ACHN (cell line): ENCODE measurements at regions of chr7 and their contacts with region 1.

Region 1: DNA sequence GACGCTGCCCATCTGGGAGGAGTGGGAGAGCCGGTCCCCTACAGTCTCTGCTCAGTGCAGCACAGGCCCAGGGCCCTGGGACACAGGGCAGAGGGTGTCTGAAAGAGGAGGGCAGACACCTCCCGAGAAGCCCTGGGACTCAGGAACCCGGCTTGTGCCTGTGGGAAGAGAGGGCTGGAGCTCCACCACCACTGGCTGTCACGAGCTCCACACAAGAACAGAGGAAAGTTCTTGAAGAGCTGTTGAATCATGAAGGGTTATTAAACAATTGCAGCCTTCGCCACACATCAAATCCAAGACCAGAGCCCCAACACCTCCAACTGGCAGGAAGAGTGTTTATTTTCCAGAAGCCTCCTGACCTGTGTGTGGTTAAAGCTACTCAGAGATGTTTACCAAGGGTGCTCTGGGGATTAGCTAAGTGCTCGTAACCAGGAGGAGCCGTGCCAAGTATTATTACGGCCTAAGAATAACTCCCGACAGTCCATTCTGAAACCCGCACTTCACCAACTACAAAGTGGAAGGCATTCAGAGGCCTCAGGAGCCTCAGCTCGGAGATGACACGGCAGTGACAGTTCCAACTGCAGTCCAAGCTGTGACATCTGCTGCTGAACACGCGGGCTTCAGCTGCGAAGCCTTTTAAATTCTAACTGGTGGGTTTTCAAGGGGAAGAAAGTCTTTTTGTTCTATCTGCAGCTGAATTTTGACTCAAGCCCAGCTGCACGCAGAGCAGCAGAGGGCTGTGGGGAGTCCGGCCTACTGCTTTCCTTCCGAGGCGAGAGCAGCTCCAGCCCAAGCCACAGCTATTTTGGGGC is 75.1 kb downstream of the MAD1L1 start:
- DNase-seq: no peak

Region 2: DNA sequence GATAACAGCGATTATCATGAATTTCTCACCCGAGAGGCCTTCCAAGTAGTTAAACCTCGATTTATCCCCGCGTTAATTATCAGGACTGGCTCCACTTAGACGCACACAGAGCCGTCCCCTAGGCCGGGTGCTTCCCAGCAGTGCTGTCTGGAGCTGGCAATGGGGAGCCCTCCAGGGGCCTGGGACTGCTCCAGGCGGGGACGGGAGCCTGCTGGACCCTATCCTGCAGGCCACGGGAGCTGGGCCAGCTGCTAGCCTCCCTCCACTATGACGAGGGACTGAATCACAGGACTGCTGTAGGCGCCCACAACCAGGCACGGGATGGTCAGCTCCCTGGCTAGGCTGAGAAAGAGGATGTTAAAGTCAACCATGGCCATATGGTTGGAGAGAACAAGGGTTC is 258.5 kb before region 1 on chr7:
- in situ Hi-C with region 1: no loop called
- DNase-seq: no peak

Region 3: DNA sequence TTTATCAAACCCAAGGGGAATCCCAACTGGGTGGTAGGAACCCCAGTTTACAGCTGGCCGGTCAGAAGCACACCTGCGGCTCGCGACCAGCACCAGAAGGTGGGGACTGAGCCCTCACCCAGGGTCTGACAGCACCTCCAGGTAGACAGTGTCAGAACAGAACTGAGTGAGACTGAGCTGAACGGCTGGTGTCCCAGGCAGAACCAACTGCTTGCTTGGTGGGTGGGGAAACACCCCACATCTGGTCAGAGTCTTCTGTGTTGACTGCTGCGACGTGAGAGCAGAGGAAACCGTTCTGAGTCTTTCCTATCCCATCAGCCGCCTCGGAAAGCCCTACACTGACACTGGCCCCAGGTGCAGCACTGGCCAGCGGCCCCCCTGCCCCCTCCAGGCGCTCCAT is 85.6 kb before region 1 on chr7:
- in situ Hi-C with region 1: loop called (anchors 10 kb)
- DNase-seq: no peak